AG04450 (cell line): ENCODE measurements at regions of chr22 and their contacts with region 1.

Region 1: GRCh38 chr22:50525390-50526068 is at the start of gene SCO2:
- DNase-seq: peak; percentile 94
- H3K4me3 ChIP-seq: peak within 1 kb of the TSS; percentile 81
- H3K27ac ChIP-seq: peak within 1 kb of the TSS; percentile 75
- H3K27me3 ChIP-seq: peaks cover 3% of the 10 kb centered on the region
- CTCF ChIP-seq: peak; percentile 51
- polyA plus RNA-seq, gene SCO2: 0.15 and 0.60 TPM in 2 replicates

Region 2: DNA sequence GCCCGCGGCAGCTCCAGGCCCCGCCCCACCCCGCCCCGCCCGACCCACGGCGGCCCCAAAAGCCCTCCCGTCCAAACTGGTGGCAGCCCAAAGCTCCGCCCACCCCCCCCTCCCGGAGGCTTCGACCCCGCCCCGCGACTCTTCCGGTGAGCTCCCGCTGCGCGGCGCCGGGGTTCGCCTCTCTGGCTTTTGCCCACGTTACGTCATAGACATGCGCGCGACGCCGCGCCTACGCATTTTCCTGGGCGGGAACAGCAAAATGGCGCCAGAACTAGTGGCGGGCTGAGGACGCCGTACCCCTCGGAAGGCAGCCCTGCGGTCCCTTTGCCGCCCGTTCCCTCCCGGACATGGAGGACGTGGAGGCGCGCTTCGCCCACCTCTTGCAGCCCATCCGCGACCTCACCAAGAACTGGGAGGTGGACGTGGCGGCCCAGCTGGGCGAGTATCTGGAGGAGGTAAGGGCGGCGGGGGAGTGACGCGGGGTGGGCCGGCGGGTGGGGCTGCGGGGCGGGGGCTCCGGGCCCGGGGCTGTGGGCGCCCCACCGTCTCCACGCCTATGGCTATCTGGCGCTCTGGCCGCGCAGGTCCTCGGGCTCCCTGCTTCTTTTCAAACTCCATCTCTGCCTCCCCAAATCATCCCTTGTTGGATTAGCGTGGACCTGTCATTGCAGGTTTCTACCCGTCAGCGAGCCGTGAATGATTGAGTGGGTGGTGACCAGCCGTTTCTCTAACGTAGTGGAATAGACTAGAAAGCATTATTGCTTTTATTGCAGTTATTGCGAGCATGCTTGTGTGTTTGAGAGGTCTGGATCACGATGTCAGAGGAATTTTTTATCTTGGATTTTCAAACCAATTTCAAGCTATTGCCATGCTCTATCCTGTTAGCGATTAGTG is 17.3 kb before region 1 on chr22 and contains the start of gene NCAPH2:
- CTCF ChIA-PET with region 1: interaction called, 28 read pairs
- POLR2A ChIA-PET with region 1: interaction called, 29 read pairs
- DNase-seq: peak; percentile 90
- H3K4me3 ChIP-seq: peak within 1 kb of the TSS; percentile 99
- H3K27ac ChIP-seq: peak within 1 kb of the TSS; percentile 68
- H3K27me3 ChIP-seq: no peaks in the 10 kb centered on the region
- CTCF ChIP-seq: no peak
- polyA plus RNA-seq, gene NCAPH2: 10.4 and 13.2 TPM in 2 replicates

Region 3: GRCh38 chr22:50537765-50538164 is 12.2 kb after region 1 on chr22:
- CTCF ChIA-PET with region 1: interaction called, 32 read pairs
- POLR2A ChIA-PET with region 1: interaction called, 15 read pairs
- DNase-seq: no peak
- H3K4me3 ChIP-seq: no peak overlapping the region
- H3K27ac ChIP-seq: peak overlapping the region; percentile 99
- H3K27me3 ChIP-seq: no peaks in the 10 kb centered on the region
- CTCF ChIP-seq: no peak

Region 4: DNA sequence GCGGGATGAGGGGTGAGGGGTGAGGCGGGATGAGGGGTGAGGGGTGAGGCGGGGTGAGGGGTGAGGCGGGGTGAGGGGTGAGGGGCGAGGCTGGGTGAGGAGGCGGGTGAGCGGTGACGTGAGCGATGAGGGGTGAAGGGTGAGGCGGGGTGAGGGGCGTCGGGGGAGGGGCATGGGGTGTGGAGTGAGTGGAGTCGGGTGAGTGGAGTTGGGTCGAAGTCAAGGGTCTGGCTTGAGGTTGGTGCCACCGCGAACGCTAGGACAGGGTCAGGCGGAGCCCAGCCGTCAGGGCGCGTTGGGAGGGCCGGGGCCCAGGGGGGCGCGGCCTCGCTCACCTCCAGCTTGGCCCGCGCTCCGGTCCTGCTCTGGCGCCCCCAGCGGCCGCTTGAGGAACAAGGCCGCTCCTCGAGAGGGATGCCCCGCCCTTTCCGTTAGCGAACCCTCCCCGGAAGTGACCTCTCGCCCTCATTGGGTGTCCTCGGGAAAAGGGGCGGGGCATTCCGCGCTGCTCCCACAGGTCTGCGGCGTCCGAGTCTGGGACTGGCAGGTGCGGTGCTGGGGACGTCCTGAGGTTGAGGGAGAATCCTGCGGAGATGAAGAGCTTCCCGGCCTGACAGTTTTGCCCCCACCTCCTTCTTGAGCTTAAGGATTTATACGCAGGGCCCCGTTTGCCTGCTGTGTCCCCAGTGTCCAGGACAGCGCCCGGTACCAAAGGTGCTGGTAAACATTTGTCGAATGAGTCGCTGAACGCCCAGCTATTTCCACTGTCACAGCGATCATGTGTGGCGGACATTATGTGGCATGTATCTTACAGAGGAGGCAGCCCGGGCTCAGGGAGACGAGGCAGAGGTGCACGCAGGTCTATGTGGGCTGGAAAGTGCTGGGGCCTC is 37.2 kb after region 1 on chr22 and contains the start of gene SYCE3:
- CTCF ChIA-PET with region 1: interaction called, 13 read pairs
- POLR2A ChIA-PET with region 1: interaction called, 4 read pairs
- DNase-seq: peak; percentile 50
- H3K4me3 ChIP-seq: peak within 1 kb of the TSS; percentile 70
- H3K27ac ChIP-seq: no peak within 1 kb of the TSS
- H3K27me3 ChIP-seq: peaks cover 22% of the 10 kb centered on the region
- CTCF ChIP-seq: peak; percentile 78
- polyA plus RNA-seq, gene SYCE3: not detected in 2 replicates

Region 5: GRCh38 chr22:50620593-50621355 is 95.2 kb after region 1 on chr22:
- CTCF ChIA-PET with region 1: interaction called, 12 read pairs
- POLR2A ChIA-PET with region 1: no interaction called
- DNase-seq: no peak
- H3K4me3 ChIP-seq: no peak overlapping the region; the same call in none of the 2 replicates
- H3K27ac ChIP-seq: no peak overlapping the region
- H3K27me3 ChIP-seq: peaks cover 13% of the 10 kb centered on the region
- CTCF ChIP-seq: no peak; the same call in 1 of the 2 replicates

Region 6: DNA sequence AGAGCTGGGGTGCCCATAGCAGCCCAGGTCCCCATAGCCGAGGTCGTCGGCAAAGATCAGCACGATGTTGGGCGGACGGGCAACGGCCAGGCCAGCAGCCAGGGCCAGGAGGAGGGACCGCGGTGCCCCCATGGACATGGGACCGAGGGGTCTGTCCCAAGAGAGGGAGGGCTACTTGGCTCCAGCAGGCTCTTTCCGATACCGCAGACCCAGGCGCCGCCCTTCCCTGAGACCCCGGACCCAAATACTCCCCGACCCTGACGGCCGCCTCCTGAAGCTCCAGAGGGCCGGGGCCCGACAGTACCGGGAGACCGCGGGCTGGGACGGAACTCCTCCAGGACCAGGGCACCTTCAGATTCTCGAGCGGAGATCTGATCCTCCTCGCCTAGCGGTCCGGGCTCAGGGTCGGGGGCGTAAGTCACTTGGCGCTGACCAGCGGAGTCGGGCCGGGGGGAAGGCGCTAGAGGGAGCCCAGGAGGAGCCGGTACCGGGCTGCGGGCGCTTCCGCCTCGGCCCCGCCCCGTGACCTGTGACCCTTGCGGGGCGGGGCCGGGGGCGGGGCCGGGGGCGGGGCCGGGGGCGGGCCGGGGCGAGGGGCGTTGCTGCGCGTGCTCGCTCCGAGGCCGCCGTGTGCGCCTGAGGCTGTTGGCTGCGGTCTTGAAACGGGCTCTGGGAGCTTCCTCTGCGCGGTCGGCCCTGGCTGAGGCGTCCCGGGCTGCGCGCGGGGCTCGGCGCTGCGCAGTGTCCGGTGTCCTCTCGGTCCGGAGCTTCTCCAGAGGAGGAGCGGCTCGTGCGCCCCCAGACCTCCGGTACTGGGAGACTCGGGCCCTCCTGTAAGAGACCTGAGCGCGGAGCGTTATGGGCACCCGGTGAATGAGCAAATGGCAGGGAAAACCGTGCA is 102.4 kb after region 1 on chr22 and contains the start of gene ARSA:
- CTCF ChIA-PET with region 1: interaction called, 4 read pairs
- POLR2A ChIA-PET with region 1: interaction called, 11 read pairs
- DNase-seq: peak; percentile 43
- H3K4me3 ChIP-seq: peak within 1 kb of the TSS; percentile 84
- H3K27ac ChIP-seq: peak within 1 kb of the TSS; percentile 31
- H3K27me3 ChIP-seq: peaks cover 3% of the 10 kb centered on the region
- CTCF ChIP-seq: peak; percentile 38
- polyA plus RNA-seq, gene ARSA: 14.3 and 22.0 TPM in 2 replicates

Region 7: DNA sequence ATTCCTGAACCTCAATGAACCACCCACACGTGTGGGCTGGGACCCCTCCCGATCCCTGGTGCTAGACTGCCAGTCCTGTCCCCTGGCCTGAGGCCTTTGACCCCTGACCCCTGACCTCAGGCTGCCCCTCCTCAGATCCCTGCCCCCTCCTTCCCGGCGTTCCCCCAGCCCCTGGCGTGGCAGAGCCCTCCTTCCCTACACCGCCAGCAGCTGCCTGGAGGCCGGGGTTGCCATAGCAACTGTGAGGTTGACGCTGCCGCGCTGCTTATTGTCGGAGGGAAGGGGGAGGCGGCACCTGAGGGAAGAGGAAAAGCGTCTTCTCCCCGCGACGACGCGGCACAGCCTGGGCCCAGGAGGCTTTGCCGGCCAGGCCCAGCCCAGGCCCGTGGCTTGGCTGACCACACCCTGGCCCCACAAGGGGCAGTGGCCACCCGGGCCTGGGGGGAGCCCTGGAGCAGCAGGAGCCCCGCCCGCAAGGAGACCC is 179.7 kb after region 1 on chr22:
- CTCF ChIA-PET with region 1: no interaction called
- POLR2A ChIA-PET with region 1: no interaction called
- DNase-seq: peak; percentile 49
- H3K4me3 ChIP-seq: peak overlapping the region; percentile 38; the same call in 1 of the 2 replicates
- H3K27ac ChIP-seq: no peak overlapping the region
- H3K27me3 ChIP-seq: no peaks in the 10 kb centered on the region
- CTCF ChIP-seq: no peak